Dendritic cell treated with granulocyte-macrophage colony-stimulating factor and Interleukin-4, amounts not matched to agents 40 ng/mL and 50 ng/mL, for 4 days (primary cell): ENCODE measurements at regions of chr10 and their contacts with region 1.

Region 1: DNA sequence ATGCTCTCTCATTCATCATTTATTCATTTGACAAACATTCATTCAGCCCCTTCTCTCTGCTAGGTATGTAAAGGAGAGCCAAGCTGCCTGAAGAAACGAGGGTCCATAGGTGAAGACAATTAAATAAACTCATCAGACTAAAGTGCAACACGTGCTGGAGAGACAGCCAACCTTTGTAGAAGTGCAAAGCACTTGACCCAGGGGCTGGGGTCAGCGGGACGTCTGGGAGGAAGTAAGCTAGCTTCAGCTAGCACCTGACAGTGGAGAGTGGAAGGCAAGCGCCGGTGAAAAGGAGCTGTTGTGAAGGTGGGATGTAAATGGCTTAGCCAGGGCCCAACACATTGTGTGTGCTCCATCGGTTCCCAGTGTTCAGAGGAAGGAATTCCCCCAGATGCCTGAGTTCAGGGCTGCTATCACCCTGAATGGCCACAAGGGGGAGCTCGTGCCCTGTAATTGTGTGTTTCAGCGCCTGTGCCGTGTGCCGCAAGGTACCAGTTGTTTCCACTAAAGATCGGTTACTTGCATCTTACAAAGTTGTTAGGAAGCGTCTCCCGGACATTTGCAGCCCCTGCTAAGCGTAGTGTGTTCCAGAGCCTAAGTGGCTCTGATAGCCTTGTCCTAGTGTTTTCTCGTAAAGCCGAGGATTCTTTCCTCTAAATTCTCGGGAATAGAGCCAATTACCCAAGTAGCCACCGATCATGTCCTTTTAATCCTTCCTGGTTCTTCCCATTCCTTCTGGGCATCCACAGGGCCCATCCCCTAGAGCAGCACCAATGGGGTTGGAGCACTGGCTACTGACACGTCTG is 30.6 kb downstream of the TLX1 start:
- H3K4me3 Mint-ChIP-seq: no peak overlapping the region
- H3K27ac Mint-ChIP-seq: no peak overlapping the region
- H3K4me1 Mint-ChIP-seq: peaks cover 8% of the 10 kb centered on the region
- H3K27me3 Mint-ChIP-seq: peaks cover 76% of the 10 kb centered on the region

Region 2: DNA sequence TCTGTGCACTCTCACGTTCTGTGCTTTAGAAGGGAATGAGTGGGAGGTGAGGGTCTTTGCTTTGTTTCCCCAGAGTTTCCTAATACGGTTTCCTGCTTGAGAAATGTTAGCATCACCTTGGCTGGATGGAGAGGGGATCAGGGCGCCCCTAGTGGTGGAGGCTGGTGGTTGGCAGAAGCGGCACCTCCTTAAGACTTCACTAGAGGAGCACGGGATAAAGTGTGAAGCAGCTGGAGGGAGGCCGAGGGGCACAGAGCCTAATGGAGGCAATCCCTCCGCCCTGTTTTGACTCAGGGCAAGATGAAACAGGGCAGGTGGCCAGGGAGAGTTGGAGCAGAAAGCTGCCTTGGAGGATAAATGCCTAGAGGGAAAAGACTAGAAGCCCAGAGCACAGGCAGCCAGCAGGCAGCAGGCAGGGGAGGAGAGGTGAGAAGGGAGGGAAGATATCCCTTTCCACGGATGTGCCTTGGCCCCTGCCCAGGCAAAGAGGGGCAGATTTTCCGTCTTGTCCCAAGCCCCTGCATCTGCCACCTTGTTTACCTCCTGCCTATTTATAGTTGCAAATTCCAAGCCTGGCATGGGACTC is 136.3 kb after region 1 on chr10:
- intact Hi-C with region 1: loop called (anchors 10 kb)
- H3K4me3 Mint-ChIP-seq: no peak overlapping the region
- H3K27ac Mint-ChIP-seq: no peak overlapping the region
- H3K4me1 Mint-ChIP-seq: peaks cover 5% of the 10 kb centered on the region
- H3K27me3 Mint-ChIP-seq: peaks cover 68% of the 10 kb centered on the region